Posterior cingulate gyrus (tissue), 11 donors: ENCODE measurements at regions of chr1 and their contacts with region 1.

Region 1: GRCh38 chr1:238252033-238252802 is 361.5 kb upstream of the ZP4 start:
- DNase-seq: peak in 8 of 10 donors; percentile 31 to 94 (median 72)

Region 2: GRCh38 chr1:238951809-238952208 is 699.6 kb after region 1 on chr1:
- intact Hi-C with region 1: loop called (anchors 5 kb)
- DNase-seq: no peak